ENCODE measurements at regions of chr13 and their contacts with region 1.

Region 1: GRCh38 chr13:42478531-42479156 is 95.3 kb upstream of the TNFSF11 start:
- DNase-seq: peak in 1 of 35 experiments; percentile 38
- ATAC-seq: no peak
- H3K4me3 ChIP-seq: no peak overlapping the region
- H3K4me3 Mint-ChIP-seq: no peak overlapping the region
- H3K27ac ChIP-seq: no peak overlapping the region
- H3K27ac Mint-ChIP-seq: no peak overlapping the region
- H3K4me1 ChIP-seq: no peaks in the 10 kb centered on the region
- H3K4me1 Mint-ChIP-seq: peaks cover 6 to 15% (median 14%) of the 10 kb centered on the region in 3 donors
- H3K27me3 ChIP-seq: no peaks in the 10 kb centered on the region
- H3K27me3 Mint-ChIP-seq: no peaks in the 10 kb centered on the region

Region 2: GRCh38 chr13:41639955-41640780 is 838.5 kb before region 1 on chr13:
- CTCF ChIA-PET with region 1: no interaction called
- POLR2A ChIA-PET with region 1: no interaction called
- DNase-seq: no peak
- ATAC-seq: no peak
- H3K4me3 ChIP-seq: no peak overlapping the region
- H3K4me3 Mint-ChIP-seq: no peak overlapping the region
- H3K27ac ChIP-seq: no peak overlapping the region
- H3K27ac Mint-ChIP-seq: no peak overlapping the region
- H3K4me1 ChIP-seq: no peaks in the 10 kb centered on the region
- H3K4me1 Mint-ChIP-seq: peaks cover 0 to 4% (median 0%) of the 10 kb centered on the region in 3 donors
- H3K27me3 ChIP-seq: no peaks in the 10 kb centered on the region
- H3K27me3 Mint-ChIP-seq: no peaks in the 10 kb centered on the region

Region 3: DNA sequence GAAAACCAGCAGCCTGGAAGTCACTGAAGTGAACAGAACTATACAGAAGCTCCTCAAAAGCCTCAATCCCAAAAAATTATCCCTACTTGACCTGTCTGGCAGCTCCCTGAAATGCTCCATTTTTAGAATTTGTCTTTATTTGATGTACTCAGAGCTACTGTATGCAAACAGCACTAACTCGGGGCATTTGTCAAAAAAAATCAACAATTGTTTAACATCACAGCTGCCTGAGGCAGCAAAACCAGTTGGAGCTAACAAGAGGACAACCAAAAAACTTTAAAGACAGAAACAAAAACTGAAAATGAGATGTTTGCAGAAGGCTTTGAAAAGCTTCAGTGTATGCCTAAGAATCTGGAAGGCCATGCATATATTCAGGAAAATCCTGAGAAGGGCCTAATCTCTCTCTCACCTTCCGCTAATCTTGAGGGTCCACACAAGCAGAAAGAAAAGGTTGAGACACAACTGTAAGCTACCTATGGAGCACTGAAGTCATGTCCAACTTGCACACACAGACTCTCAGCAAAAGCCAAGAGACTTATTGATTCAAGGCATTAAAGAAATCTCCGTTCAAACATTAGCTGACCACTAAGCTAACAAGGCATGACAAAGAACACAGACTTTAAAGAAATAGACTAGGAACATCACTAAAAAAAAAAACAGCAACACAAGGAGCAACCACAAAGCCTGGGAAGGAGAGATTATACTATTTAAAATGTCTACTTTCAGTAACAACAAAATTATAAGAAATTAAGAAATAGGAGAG is 533.8 kb before region 1 on chr13:
- CTCF ChIA-PET with region 1: interaction called in 1 of 2 experiments, 11 read pairs
- POLR2A ChIA-PET with region 1: no interaction called
- DNase-seq: no peak
- ATAC-seq: no peak
- H3K4me3 ChIP-seq: no peak overlapping the region
- H3K4me3 Mint-ChIP-seq: no peak overlapping the region
- H3K27ac ChIP-seq: no peak overlapping the region
- H3K27ac Mint-ChIP-seq: no peak overlapping the region
- H3K4me1 ChIP-seq: no peaks in the 10 kb centered on the region
- H3K4me1 Mint-ChIP-seq: peaks cover 10 to 22% (median 18%) of the 10 kb centered on the region in 3 donors
- H3K27me3 ChIP-seq: no peaks in the 10 kb centered on the region
- H3K27me3 Mint-ChIP-seq: no peaks in the 10 kb centered on the region

Region 4: DNA sequence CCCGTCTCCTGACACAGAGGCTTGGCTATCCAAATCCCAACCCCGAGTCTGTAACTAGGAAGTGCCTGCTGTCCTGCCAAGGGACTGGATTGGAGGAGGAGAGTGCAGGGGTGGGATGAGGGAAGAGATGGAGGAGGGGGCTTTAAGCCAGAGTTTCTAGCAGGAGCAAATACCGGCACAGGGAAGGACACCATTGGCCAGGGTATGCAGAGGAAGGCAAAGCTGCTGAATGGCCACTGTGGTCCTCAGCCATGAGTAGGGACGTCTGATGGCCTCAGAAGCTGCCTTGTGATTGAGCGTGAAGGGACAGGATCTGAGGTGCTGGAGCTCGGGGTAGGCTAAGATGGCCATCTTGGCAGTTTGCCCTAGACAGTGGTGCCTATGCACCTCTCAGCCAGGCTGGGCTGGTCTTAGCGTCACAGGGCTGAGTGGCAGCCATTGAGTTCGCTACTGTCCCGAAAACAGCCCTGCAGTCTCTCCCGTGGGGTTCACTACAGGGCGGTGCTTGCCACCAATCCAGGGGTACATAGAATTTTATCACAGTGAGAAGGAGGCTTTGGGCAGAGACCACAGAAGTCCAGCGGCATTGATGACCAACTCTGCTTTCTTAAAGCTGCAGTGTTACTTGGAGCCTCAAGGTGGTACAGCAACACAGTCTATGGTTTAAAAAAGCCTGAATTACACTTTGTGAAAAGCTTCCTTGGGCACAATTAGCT is 144.9 kb before region 1 on chr13:
- CTCF ChIA-PET with region 1: interaction called, 5 to 11 read pairs
- POLR2A ChIA-PET with region 1: no interaction called
- DNase-seq: peak in 1 of 35 experiments; percentile 46
- ATAC-seq: peak; percentile 55 to 66 (median 63)
- H3K4me3 ChIP-seq: no peak overlapping the region
- H3K4me3 Mint-ChIP-seq: no peak overlapping the region
- H3K27ac ChIP-seq: no peak overlapping the region
- H3K27ac Mint-ChIP-seq: peak overlapping the region in 1 of 2 donors; percentile 50
- H3K4me1 ChIP-seq: peaks cover 6 to 10% of the 10 kb centered on the region in 2 experiments
- H3K4me1 Mint-ChIP-seq: peaks cover 26 to 34% (median 28%) of the 10 kb centered on the region in 3 donors
- H3K27me3 ChIP-seq: no peaks in the 10 kb centered on the region
- H3K27me3 Mint-ChIP-seq: no peaks in the 10 kb centered on the region

Region 5: GRCh38 chr13:42498521-42498920 is 19.9 kb after region 1 on chr13:
- CTCF ChIA-PET with region 1: no interaction called
- POLR2A ChIA-PET with region 1: no interaction called
- DNase-seq: peak in 1 of 35 experiments; percentile 16
- ATAC-seq: no peak
- H3K4me3 ChIP-seq: no peak overlapping the region
- H3K4me3 Mint-ChIP-seq: no peak overlapping the region
- H3K27ac ChIP-seq: no peak overlapping the region
- H3K27ac Mint-ChIP-seq: no peak overlapping the region
- H3K4me1 ChIP-seq: peaks cover 0 to 7% of the 10 kb centered on the region in 2 experiments
- H3K4me1 Mint-ChIP-seq: peaks cover 19 to 28% (median 23%) of the 10 kb centered on the region in 3 donors
- H3K27me3 ChIP-seq: no peaks in the 10 kb centered on the region
- H3K27me3 Mint-ChIP-seq: no peaks in the 10 kb centered on the region

Measured in T-cell (primary cell).